SK-N-SH (cell line): ENCODE measurements at regions of chr16 and their contacts with region 1.

Region 1: DNA sequence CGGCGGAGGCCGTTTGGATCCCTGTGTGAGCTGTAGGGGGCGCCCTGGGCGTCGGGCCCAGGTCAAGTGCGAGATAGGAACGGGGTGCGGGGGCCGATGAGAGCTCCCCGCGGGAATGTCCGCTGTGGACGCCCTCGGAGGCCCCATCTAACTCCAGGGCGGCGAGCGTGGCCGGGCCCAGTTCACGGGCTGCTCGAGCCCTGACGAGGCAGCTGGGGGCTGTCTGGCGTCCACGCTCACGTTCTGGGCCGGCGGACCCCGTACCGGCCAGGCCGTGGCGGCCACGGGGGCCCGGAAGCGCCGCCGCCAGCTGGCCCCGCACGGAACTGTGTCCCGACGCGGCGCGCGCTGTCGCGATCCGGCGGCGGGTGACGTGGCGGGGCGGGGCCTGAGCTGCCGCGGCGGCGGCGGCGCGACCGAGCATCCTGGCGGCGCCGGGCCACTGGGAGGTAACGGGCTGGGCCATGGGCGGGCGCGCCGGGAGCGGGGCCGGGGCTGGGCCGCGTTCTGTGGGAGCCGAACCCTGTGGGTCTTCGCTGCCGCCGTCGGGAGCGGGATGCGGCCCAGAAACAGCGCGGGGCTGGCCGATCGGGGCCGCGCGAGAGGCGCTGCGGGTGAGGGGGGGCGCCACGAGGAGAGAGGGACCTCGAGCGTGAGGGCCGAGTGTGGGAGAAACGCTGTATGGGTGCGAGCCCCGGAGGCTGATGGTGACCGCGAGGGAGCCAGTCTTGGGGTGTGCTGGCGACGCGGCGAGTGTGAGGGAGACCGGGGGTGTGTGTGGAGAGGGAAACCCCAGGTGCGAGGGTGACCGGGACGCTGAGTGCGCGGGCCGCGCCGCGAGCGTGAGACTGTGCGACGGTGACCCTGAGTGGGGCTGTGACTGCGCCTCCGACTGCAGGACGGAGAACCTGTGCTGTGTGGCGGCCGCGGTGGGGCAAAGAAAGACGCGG is at the start of gene SLC7A6:
- DNase-seq: peak; percentile 93
- H3K4me3 ChIP-seq: peak within 1 kb of the TSS; percentile 65 to 80
- H3K27ac ChIP-seq: peak within 1 kb of the TSS; percentile 87 to 89
- H3K4me1 ChIP-seq: peaks cover 0 to 4% of the 10 kb centered on the region in 2 experiments; a peak in 2 of 4 replicates
- H3K27me3 ChIP-seq: no peaks in the 10 kb centered on the region
- CTCF ChIP-seq: peak; percentile 77
- EP300 ChIP-seq: peak in 1 of 2 experiments; percentile 23; a peak in 1 of 4 replicates
- RAD21 ChIP-seq: no peak; the same call in 1 of the 2 replicates
- polyA plus RNA-seq, gene SLC7A6: 19.0 and 37.3 TPM in 2 replicates

Region 2: DNA sequence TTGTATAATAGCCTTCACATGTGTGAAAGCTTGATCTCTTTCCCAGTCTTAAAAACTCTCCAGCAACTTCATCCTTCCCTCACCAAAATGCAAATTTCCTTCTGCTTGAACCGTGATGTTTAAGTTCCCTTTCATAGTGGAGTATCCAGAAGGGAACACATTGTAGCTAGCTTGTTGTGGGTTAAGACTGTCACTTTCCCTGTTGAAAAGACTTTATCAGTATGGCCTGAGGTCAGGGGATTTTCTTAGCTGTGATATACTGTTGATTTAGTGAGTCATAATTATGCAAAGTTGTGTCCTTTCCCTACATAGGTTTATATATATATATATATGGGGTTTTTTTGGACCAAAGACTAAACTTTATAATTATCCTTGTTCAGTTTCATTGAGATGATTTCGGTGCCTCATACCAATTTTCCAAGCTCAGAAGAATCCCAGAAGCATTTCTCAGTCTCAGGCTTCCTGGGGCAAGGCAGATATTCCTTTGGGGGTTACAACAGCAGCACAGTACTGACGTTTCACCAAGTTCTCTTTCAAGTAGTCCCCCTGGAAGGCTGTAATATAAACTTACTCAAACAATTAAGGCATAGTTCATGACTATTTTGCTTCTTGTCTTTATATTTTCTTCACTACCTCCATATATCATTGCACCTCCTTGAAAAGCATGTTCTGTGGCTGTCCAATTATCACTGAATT is 64.2 kb before region 1 on chr16:
- CTCF ChIA-PET with region 1: no interaction called
- POLR2A ChIA-PET with region 1: no interaction called
- DNase-seq: no peak
- H3K4me3 ChIP-seq: no peak overlapping the region
- H3K27ac ChIP-seq: peak overlapping the region in 1 of 2 experiments; percentile 21; a peak in 1 of 4 replicates
- H3K4me1 ChIP-seq: peaks cover 0 to 6% of the 10 kb centered on the region in 2 experiments; a peak in 3 of 4 replicates
- H3K27me3 ChIP-seq: no peaks in the 10 kb centered on the region
- CTCF ChIP-seq: no peak
- EP300 ChIP-seq: no peak
- RAD21 ChIP-seq: no peak

Region 3: DNA sequence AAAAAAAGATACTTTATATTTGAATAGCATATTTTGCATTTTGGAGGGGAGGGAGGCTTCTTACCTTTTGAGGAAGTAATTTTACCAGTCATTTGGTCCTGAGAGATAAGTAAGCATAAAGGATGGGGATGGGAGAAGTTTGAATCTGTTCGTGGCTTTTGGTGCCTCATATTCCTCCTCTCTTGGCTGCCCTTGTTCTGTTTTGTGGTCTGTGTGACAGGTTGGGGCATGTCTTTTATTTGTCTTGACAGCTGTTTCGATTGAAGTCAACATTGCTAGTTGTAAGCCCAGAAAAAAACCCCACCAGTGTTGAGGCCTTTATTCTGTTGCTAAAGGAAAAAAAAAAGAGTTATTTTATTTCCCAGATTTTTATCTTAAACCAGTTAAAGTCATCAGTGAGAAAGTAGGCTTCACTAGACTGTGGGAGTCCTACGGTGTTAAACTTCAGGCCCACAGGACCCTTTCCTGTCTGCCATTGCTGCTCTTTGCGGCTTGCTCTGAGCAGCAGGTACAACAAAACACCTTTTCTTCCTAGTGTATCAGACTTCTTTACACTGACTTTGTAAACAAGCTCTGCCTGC is 11.3 kb after region 1 on chr16:
- CTCF ChIA-PET with region 1: interaction called, 15 read pairs
- POLR2A ChIA-PET with region 1: interaction called, 5 read pairs
- DNase-seq: no peak
- H3K4me3 ChIP-seq: no peak overlapping the region
- H3K27ac ChIP-seq: peak overlapping the region; percentile 20 to 40
- H3K4me1 ChIP-seq: no peaks in the 10 kb centered on the region; a peak in 1 of 4 replicates
- H3K27me3 ChIP-seq: no peaks in the 10 kb centered on the region
- CTCF ChIP-seq: no peak
- EP300 ChIP-seq: no peak
- RAD21 ChIP-seq: no peak

Region 4: DNA sequence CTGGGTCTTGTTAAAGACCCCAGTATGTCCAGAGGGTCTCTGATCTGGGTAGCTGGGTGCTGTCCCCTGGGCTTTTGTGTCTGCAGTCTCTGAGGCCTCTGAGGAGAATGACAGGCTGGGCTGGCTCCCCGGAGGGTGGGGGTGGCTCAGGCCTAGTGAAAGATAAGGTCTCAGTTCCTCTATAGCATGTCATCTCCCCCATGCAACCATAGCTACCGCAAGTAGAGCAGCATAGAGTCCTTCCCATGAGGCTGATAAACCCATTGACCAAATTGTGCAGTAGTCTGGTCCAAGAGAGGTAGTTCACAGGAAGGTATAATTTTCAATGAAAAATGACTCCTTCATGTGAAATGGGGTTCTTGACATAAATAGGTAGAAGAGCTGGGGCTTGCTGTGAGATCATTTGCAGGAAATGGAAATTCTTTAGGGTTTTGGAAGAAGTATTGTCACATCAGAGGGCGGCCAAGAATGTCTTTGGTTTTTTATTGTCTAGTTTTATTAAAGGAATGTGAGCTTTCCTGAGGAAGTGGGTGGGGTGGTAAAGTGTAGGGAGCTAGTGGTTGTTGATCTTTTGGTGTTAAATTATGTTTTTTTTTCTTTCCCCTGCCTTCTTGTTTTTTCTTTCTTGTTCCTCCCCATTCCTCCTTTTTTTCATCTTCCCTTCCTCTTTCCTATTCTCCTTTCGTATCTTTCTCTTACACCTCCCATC is 25.4 kb after region 1 on chr16:
- CTCF ChIA-PET with region 1: interaction called, 80 read pairs
- POLR2A ChIA-PET with region 1: no interaction called
- DNase-seq: no peak
- H3K4me3 ChIP-seq: no peak overlapping the region
- H3K27ac ChIP-seq: no peak overlapping the region
- H3K4me1 ChIP-seq: no peaks in the 10 kb centered on the region
- H3K27me3 ChIP-seq: no peaks in the 10 kb centered on the region
- CTCF ChIP-seq: no peak
- EP300 ChIP-seq: no peak
- RAD21 ChIP-seq: no peak

Region 5: GRCh38 chr16:68310761-68311511 is 46.5 kb after region 1 on chr16 and contains the starts of genes PRMT7 and SLC7A6OS:
- CTCF ChIA-PET with region 1: interaction called, 24 read pairs
- POLR2A ChIA-PET with region 1: interaction called, 16 read pairs
- DNase-seq: peak; percentile 98
- H3K4me3 ChIP-seq: peak within 1 kb of the TSS; percentile 83 to 87
- H3K27ac ChIP-seq: peak within 1 kb of the TSS; percentile 66 to 76
- H3K4me1 ChIP-seq: peaks cover 10 to 14% of the 10 kb centered on the region in 2 experiments; a peak in 2 of 4 replicates
- H3K27me3 ChIP-seq: no peaks in the 10 kb centered on the region
- CTCF ChIP-seq: no peak
- EP300 ChIP-seq: no peak
- RAD21 ChIP-seq: no peak
- polyA plus RNA-seq, gene PRMT7: 46.0 and 66.8 TPM in 2 replicates
- polyA plus RNA-seq, gene SLC7A6OS: 6.6 and 9.6 TPM in 2 replicates

Region 6: DNA sequence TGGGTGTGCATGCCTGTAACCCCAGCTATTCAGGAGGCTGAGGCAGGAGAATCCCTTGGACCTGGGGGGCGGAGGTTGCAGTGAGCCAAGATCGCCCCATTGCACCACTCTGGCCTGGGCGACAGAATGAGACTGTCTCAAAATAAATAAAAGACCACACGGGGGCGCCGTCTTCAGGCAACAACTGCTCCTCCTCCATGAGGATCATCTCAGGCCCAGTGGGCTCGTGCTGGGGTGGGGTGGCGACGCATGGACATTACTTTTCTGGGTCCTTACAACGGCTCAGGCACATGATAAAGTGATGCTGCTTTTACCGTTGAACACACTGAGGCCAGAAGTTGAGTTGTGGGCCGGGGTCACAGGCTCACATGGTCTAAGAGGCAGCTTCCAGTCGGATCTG is 102.6 kb after region 1 on chr16:
- CTCF ChIA-PET with region 1: interaction called, 10 read pairs
- POLR2A ChIA-PET with region 1: no interaction called
- DNase-seq: peak; percentile 74
- H3K4me3 ChIP-seq: no peak overlapping the region
- H3K27ac ChIP-seq: no peak overlapping the region
- H3K4me1 ChIP-seq: peaks cover 0 to 54% of the 10 kb centered on the region in 2 experiments; a peak in 2 of 4 replicates
- H3K27me3 ChIP-seq: no peaks in the 10 kb centered on the region
- CTCF ChIP-seq: peak; percentile 54
- EP300 ChIP-seq: no peak
- RAD21 ChIP-seq: peak; percentile 51